CD8-positive, alpha-beta T cell (primary cell): ENCODE measurements at regions of chr16 and their contacts with region 1.

Region 1: DNA sequence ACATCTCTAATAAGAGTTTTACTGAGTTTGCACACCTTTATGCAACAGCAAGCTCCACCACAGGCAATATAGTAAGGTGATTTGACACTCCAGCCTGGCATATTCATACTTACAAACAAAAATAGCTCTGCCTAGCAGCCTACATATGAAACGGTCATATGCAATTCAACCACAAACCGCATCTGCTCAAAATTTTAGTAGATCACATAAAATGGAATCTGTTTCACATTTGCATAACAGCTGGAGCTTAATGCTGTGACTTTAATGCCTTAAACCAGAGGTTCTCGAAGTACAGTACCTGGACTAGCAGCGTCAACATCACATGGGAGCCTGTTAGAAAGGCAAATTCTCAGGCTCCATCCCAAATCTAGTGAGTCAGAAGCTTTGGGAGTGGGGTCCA is 578.4 kb downstream of the CDH11 start:
- DNase-seq: no peak
- ATAC-seq: no peak
- H3K4me3 ChIP-seq: no peak overlapping the region
- H3K4me3 Mint-ChIP-seq: no peak overlapping the region
- H3K27ac ChIP-seq: no peak overlapping the region
- H3K27ac Mint-ChIP-seq: no peak overlapping the region
- H3K4me1 ChIP-seq: no peaks in the 10 kb centered on the region
- H3K4me1 Mint-ChIP-seq: no peaks in the 10 kb centered on the region
- H3K27me3 ChIP-seq: no peaks in the 10 kb centered on the region
- H3K27me3 Mint-ChIP-seq: no peaks in the 10 kb centered on the region
- CTCF ChIP-seq: no peak

Region 2: DNA sequence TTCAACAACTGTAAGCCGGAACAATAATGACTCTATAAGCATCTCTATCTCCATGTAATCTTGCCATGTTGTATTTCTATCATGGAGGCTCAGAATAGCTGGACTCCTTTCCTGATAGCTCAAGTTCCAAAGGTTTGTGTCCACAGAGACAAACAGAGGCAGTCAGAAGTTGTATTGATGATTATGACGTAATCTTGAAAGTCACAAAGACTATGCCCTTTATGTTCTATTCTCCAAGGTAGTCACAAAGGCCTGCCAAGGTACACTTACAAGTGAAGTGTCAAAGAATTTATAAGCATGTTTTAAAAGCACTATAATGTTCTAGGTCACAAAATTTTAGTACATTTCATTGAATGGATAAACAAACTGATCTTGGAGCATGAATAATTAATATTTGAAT is 36.3 kb after region 1 on chr16:
- CTCF ChIA-PET with region 1: no interaction called
- POLR2A ChIA-PET with region 1: no interaction called
- intact Hi-C with region 1: loop called in 1 of 2 experiments (anchors 5 kb)
- DNase-seq: no peak
- ATAC-seq: no peak
- H3K4me3 ChIP-seq: no peak overlapping the region
- H3K4me3 Mint-ChIP-seq: no peak overlapping the region
- H3K27ac ChIP-seq: no peak overlapping the region
- H3K27ac Mint-ChIP-seq: no peak overlapping the region
- H3K4me1 ChIP-seq: no peaks in the 10 kb centered on the region
- H3K4me1 Mint-ChIP-seq: no peaks in the 10 kb centered on the region
- H3K27me3 ChIP-seq: no peaks in the 10 kb centered on the region
- H3K27me3 Mint-ChIP-seq: no peaks in the 10 kb centered on the region
- CTCF ChIP-seq: no peak